Heart right ventricle (tissue), 16 donors: ENCODE measurements at regions of chr16 and their contacts with region 1.

Region 1: GRCh38 chr16:46853713-46854443 is 22.9 kb upstream of the C16orf87 start:
- DNase-seq: peak; percentile 74 to 76
- ATAC-seq: peak; percentile 65 to 85 (median 81)
- H3K4me3 ChIP-seq: no peak overlapping the region
- H3K27ac ChIP-seq: no peak overlapping the region
- H3K4me1 ChIP-seq: no peaks in the 10 kb centered on the region
- H3K27me3 ChIP-seq: no peaks in the 10 kb centered on the region
- CTCF ChIP-seq: peak; percentile 68 to 88 (median 82)

Region 2: DNA sequence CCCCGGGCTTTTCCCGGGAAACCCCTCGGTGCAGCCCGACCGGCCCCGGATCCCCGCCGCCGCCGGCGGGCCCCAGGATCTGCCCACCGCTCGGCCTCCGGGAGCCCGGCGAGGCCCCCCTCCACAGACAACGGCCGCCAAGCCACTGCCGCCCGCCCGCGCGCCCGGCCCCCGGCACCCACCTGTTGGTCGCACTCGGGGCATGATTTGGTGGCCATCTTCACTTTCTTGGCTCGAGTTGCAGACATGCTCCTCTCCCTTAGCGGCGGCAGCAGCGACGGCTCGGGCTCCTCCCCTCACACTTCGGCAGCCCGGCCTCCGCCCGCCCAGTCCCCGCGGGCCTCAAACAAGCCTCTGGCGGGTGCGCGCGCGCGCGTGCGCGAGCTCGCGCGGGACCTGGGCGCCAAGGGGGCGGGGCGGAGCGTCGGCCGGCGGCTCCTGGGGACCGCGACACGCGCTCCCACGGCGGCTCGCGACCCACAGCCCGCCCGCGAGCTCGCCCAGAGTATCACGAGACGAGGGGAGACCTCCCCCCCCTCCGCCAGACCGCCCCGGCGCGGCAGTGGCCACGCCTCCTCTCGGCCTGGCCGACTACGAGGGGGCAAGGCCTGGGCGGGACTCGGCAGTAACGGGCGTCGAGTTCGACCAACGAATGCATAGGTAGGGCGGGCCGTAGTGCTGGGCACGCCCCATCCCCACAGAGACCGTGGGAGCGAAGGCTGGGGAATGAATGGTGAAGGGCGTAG is 22.8 kb before region 1 on chr16 and contains the start of gene C16orf87:
- intact Hi-C with region 1: loop called in 1 of 10 experiments (anchors 2 kb)
- DNase-seq: peak; percentile 92 to 94
- ATAC-seq: peak; percentile 97 to 99 (median 98)
- H3K4me3 ChIP-seq: peak within 1 kb of the TSS; percentile 69 to 96 (median 92)
- H3K27ac ChIP-seq: peak within 1 kb of the TSS; percentile 76 to 97 (median 90)
- H3K4me1 ChIP-seq: peaks cover 0 to 19% (median 12%) of the 10 kb centered on the region in 9 donors
- H3K27me3 ChIP-seq: no peaks in the 10 kb centered on the region
- CTCF ChIP-seq: no peak
- total RNA-seq, gene C16orf87: 8.6 to 17.8 (median 12.3) TPM

Region 3: DNA sequence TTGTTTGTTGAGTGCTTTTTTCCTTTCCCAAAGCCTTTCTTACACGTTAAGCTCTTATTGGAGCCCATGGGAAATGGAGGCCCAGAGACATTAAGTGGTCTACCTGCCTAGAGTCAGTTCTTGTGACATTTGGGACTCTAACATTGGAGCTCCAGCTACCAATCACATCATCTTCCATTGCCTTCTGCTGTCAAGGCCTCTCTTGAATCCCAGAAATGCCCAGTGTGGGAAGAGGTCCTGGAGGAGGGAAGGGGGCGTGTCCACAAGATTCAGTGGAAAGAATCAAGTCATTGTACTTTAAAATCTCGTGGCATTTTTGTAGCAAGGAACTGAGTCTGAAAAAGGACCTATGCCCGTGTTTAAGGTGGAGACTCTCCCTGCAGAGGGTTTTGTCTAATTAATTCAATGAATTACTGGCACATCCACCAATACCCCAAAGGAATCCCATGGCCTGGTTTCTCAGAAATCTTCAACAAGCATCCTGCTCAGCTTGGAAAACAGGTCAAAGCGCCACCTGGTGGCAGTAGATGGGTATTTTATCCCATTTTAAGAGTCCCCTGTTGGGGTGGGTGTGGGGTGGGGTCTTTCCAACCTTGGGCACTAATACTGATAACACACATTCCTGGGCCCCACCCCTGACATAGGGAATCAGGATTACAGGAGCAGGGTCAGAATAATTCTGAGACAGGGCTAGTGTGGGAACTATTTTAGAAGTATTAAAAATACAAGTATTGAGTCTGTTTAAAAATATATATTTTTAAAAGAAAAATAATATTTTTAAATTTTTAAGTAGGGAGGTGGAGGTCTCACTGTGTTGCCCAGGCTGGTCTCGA is 54.9 kb after region 1 on chr16:
- intact Hi-C with region 1: loop called (anchors 1 to 5 kb)
- DNase-seq: peak in 1 of 2 donors; percentile 43
- ATAC-seq: peak; percentile 33 to 73 (median 64)
- H3K4me3 ChIP-seq: no peak overlapping the region
- H3K27ac ChIP-seq: no peak overlapping the region
- H3K4me1 ChIP-seq: peaks cover 0 to 7% (median 0%) of the 10 kb centered on the region in 9 donors
- H3K27me3 ChIP-seq: no peaks in the 10 kb centered on the region
- CTCF ChIP-seq: peak; percentile 60 to 91 (median 77)

Region 4: DNA sequence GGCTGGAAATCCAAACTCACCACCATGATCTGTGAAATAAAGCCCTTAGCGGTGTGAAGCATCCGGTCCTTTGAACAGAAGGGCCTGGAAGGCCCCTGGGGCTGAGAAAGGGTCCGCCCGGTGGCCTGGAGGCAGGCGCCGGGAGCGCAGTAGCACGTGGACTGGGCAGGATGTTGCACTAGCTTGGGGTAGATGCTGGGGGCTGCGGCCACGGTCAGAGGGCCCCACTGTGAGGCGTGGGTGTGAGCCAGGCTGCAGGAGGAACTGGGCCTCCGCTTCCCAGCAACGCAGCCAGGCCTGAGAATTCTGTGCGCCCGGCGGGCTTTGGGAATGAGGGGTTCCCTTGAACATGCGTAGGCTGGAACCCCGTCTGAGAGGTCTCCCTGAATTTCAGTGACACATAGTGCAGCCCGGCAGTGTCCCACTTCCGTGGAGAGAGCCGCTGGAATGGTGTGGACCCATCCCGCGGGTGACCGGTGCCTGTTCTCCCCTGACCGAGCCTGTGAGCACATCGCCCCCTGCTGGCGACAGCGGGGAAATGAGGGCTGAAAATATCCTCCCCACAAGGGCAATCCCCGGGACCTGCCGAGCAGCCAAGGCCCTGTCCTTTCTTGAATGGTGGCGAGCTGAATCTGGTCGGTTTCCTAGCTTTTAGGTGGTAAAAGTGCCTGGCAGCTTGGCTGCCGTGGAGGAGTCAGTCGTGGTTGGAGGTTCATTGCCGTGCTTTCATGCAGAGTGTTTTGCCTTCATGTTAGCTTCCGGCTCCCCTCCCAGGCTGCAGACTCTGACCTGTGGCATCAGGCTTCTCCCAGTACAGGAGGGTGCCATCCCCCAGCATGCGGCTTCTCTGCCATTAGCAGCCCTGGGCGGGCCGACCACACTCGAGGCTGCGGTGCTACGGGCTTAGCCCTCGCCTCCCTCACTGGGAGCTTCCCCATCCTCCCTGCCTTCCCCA is 75.8 kb after region 1 on chr16:
- intact Hi-C with region 1: loop called in 3 of 10 experiments (anchors 5 kb)
- DNase-seq: peak; percentile 47 to 68
- ATAC-seq: peak; percentile 51 to 80 (median 74)
- H3K4me3 ChIP-seq: no peak overlapping the region
- H3K27ac ChIP-seq: no peak overlapping the region
- H3K4me1 ChIP-seq: peaks cover 0 to 10% (median 4%) of the 10 kb centered on the region in 9 donors
- H3K27me3 ChIP-seq: no peaks in the 10 kb centered on the region
- CTCF ChIP-seq: peak; percentile 71 to 91 (median 84)